Heart right ventricle (tissue), 16 donors: ENCODE measurements at regions of chr12 and their contacts with region 1.

Region 1: DNA sequence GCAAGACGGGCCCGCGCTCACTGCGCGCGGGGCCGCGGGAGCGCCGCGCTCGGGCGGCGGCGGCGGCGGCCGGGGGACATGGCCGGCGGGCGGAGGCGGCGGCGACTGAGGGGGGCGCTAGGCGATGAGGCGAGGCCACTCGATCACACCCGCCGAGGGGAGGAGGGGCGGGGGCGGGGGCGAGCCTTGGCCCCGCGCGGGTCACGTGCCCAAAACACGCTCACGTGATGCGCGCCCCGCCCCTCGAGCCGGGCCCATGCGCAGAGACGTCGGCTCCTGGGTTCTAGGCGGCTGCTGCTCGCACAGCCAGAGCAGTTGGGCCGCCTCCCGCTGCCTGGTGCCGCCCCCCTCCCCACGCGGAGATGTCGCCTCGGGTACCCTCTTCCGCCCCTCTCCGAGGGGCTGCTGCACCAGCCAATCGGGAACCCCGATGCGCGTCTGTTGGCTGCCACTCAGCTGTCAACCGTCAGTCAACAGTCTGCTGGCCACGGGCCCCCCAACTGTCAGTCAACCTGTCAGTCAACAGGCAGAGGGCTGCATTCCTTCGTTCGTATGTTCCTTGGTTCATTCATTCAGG is at the start of gene SPPL3:
- DNase-seq: peak; percentile 93 to 95
- ATAC-seq: peak; percentile 94 to 97 (median 95)
- H3K4me3 ChIP-seq: peak within 1 kb of the TSS; percentile 82 to 98 (median 92)
- H3K27ac ChIP-seq: peak within 1 kb of the TSS; percentile 80 to 94 (median 88)
- H3K4me1 ChIP-seq: peaks cover 0 to 42% (median 30%) of the 10 kb centered on the region in 9 donors
- H3K27me3 ChIP-seq: no peaks in the 10 kb centered on the region
- CTCF ChIP-seq: peak in 2 of 9 donors; percentile 23 to 32
- total RNA-seq, gene SPPL3: 26.6 to 45.0 (median 36.2) TPM

Region 2: DNA sequence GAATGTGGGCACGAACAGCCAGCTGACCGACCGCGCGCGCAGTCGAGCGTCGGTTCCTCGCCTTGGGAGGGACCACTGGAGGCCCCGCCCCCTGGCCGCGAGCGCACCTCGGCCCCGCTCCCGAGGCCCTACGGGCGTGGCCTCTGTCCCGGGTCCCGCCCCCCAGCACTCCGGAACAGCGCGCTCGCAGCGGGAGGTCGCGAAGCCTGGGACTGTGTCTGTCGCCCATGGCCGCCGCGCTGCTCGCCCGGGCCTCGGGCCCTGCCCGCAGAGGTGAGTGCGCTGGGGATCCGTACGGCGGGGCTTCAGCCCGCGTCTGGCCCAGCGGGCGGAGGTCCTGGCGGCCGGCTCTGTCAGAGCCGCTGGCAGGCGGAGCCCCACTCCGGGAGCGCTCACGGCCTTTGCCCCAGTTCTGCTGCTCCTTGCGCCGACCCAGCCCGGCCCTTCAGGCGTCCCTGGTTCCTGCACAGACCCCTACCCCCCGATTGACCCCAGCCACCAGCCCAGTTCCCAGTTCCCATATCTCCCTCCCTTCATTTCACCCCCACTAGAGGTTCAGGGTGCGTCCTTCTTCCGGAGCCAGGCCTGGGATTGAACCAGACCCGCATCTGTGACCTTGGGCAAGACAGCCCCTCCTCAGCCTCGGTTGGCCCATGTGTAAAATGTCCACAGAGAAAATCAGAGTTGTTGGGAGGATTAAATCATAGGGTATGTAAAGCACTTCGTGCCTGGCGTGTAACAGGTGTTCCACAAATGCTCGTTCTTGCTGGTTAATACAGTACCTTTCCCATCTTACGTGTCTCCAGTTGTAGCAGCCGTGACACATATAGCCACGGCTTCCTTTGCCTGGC is 178.4 kb before region 1 on chr12 and contains the start of gene ACADS:
- intact Hi-C with region 1: loop called in 1 of 10 experiments (anchors 10 kb)
- DNase-seq: peak; percentile 88 to 94
- ATAC-seq: peak; percentile 98 to 99 (median 99)
- H3K4me3 ChIP-seq: peak within 1 kb of the TSS; percentile 55 to 90 (median 78)
- H3K27ac ChIP-seq: peak within 1 kb of the TSS; percentile 34 to 91 (median 88)
- H3K4me1 ChIP-seq: peaks cover 0 to 30% (median 19%) of the 10 kb centered on the region in 9 donors
- H3K27me3 ChIP-seq: no peaks in the 10 kb centered on the region
- CTCF ChIP-seq: peak in 3 of 9 donors; percentile 14 to 28 (median 25)
- total RNA-seq, gene ACADS: 67.0 to 119 (median 77.9) TPM

Region 3: DNA sequence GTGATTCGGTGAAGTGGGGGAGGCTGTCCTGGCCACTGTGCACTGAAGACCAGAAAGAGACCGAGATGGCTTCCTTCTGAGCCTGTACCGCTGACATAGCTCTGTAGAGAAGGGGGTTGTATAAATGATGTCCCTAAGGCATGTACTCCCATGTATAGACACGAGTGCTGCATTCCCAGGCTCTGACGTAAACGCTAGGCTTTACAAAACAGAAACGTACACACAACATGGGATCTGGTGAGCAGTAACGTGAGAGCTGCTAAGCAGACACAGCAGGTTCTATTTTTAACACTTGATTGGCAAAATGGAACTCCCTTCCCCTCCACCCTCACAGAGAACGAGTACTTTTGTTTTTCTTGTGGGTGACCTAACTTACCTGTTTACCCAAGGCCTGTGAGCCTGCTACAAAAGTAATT is 142.8 kb before region 1 on chr12:
- intact Hi-C with region 1: loop called in 1 of 10 experiments (anchors 2 kb)
- DNase-seq: peak in 1 of 2 donors; percentile 40
- ATAC-seq: peak; percentile 39 to 84 (median 74)
- H3K4me3 ChIP-seq: peak overlapping the region in 1 of 10 donors; percentile 6
- H3K27ac ChIP-seq: peak overlapping the region; percentile 25 to 85 (median 66)
- H3K4me1 ChIP-seq: peaks cover 0 to 19% (median 14%) of the 10 kb centered on the region in 9 donors
- H3K27me3 ChIP-seq: no peaks in the 10 kb centered on the region
- CTCF ChIP-seq: no peak

Region 4: DNA sequence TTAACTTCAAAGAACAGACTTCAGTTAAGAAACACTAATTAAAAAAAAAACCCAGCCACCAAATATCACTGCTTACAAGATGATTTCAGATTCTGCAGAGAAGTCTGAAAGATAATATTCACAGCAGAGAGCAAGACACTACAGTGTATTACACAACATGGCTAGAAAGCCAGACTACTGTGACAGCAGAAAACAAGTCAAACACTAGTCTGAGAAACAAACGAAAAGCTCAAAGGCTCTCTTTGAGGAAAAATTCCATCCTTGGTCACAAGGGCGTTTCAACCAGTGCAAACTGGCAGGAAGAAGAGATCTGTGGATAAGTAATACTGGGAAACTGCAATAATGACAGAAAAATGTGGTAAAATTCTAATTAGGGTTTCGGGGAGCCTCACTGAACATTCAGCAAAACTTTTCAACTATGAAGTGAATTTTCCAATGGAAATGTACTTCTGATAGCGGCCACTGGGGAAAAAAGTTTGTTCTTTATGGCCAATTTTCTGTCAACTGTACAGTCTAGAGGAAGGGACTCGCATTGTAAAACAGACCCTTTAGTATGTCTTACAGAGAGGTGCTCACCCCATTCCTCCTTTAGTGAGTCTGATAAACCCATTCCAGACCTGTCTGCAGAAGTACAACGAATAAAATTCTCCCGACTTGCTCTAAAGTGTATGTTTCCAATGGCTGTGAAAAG is 128.3 kb before region 1 on chr12:
- intact Hi-C with region 1: loop called in 3 of 10 experiments (anchors 5 kb)
- DNase-seq: no peak
- ATAC-seq: peak in 1 of 8 donors; percentile 47
- H3K4me3 ChIP-seq: no peak overlapping the region
- H3K27ac ChIP-seq: peak overlapping the region in 4 of 10 donors; percentile 3 to 38 (median 14)
- H3K4me1 ChIP-seq: peaks cover 4 to 37% (median 20%) of the 10 kb centered on the region in 9 donors
- H3K27me3 ChIP-seq: no peaks in the 10 kb centered on the region
- CTCF ChIP-seq: no peak

Region 5: GRCh38 chr12:120783197-120783596 is 121.1 kb before region 1 on chr12:
- intact Hi-C with region 1: loop called in 3 of 10 experiments (anchors 5 kb)
- DNase-seq: no peak
- ATAC-seq: peak in 6 of 8 donors; percentile 38 to 89 (median 70)
- H3K4me3 ChIP-seq: peak overlapping the region in 1 of 10 donors; percentile 10
- H3K27ac ChIP-seq: peak overlapping the region in 9 of 10 donors; percentile 40 to 84 (median 63)
- H3K4me1 ChIP-seq: peaks cover 0 to 22% (median 8%) of the 10 kb centered on the region in 9 donors
- H3K27me3 ChIP-seq: no peaks in the 10 kb centered on the region
- CTCF ChIP-seq: no peak

Region 6: GRCh38 chr12:120797677-120798642 is 106.3 kb before region 1 on chr12:
- intact Hi-C with region 1: no loop called
- DNase-seq: no peak
- ATAC-seq: no peak
- H3K4me3 ChIP-seq: no peak overlapping the region
- H3K27ac ChIP-seq: no peak overlapping the region
- H3K4me1 ChIP-seq: peaks cover 0 to 38% (median 0%) of the 10 kb centered on the region in 9 donors
- H3K27me3 ChIP-seq: no peaks in the 10 kb centered on the region
- CTCF ChIP-seq: no peak

Region 7: DNA sequence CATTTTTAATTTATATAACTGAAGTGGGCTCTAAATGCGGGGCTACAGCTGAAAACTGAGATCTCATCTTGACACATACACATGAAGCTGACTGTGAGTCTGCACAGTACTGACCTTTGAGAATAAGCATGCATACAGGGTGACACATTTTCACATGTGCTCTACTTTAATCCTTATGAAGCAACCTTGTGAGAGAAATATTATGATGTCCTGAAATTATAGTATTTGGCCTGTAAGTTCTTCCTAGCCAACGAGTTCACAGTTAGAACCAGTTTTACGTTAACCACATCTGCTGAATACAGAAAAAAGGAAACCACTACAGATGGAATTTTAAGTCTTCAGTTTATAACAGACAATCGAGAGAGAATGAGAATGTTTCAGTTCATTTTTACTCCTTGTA is 70.4 kb before region 1 on chr12:
- intact Hi-C with region 1: loop called in 1 of 10 experiments (anchors 10 kb)
- DNase-seq: no peak
- ATAC-seq: peak in 6 of 8 donors; percentile 39 to 62 (median 54)
- H3K4me3 ChIP-seq: no peak overlapping the region
- H3K27ac ChIP-seq: peak overlapping the region in 4 of 10 donors; percentile 24 to 38 (median 30)
- H3K4me1 ChIP-seq: peaks cover 16 to 83% (median 65%) of the 10 kb centered on the region in 9 donors
- H3K27me3 ChIP-seq: no peaks in the 10 kb centered on the region
- CTCF ChIP-seq: no peak

Region 8: GRCh38 chr12:120846721-120847120 is 57.6 kb before region 1 on chr12:
- intact Hi-C with region 1: no loop called
- DNase-seq: no peak
- ATAC-seq: no peak
- H3K4me3 ChIP-seq: no peak overlapping the region
- H3K27ac ChIP-seq: peak overlapping the region in 3 of 10 donors; percentile 1 to 83 (median 35)
- H3K4me1 ChIP-seq: peaks cover 4 to 97% (median 88%) of the 10 kb centered on the region in 9 donors
- H3K27me3 ChIP-seq: no peaks in the 10 kb centered on the region
- CTCF ChIP-seq: no peak

Region 9: DNA sequence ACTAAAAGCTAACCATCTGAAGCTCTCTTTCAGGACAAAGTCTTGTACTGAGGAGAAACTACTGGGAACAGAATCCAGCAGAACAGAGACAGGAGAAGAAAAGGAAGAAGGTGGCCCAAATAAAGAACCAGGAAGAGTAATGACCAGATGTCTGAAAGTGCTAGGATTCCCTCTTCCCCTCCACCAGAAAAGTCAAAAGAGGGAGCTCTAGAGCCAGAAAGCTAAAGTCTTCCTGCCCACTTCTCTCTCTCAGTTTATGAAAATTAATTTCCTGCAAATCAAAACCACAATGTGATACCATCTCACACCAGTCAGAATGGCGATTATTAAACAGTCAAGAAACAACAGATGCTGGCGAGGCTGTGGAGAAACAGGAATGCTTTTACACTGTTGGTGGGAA is 47.3 kb before region 1 on chr12:
- intact Hi-C with region 1: loop called in 1 of 10 experiments (anchors 5 kb)
- DNase-seq: no peak
- ATAC-seq: peak in 2 of 8 donors; percentile 28 to 37
- H3K4me3 ChIP-seq: no peak overlapping the region
- H3K27ac ChIP-seq: peak overlapping the region in 1 of 10 donors; percentile 12
- H3K4me1 ChIP-seq: peaks cover 0 to 49% (median 38%) of the 10 kb centered on the region in 9 donors
- H3K27me3 ChIP-seq: no peaks in the 10 kb centered on the region
- CTCF ChIP-seq: peak in 5 of 9 donors; percentile 14 to 53 (median 45)

Region 10: DNA sequence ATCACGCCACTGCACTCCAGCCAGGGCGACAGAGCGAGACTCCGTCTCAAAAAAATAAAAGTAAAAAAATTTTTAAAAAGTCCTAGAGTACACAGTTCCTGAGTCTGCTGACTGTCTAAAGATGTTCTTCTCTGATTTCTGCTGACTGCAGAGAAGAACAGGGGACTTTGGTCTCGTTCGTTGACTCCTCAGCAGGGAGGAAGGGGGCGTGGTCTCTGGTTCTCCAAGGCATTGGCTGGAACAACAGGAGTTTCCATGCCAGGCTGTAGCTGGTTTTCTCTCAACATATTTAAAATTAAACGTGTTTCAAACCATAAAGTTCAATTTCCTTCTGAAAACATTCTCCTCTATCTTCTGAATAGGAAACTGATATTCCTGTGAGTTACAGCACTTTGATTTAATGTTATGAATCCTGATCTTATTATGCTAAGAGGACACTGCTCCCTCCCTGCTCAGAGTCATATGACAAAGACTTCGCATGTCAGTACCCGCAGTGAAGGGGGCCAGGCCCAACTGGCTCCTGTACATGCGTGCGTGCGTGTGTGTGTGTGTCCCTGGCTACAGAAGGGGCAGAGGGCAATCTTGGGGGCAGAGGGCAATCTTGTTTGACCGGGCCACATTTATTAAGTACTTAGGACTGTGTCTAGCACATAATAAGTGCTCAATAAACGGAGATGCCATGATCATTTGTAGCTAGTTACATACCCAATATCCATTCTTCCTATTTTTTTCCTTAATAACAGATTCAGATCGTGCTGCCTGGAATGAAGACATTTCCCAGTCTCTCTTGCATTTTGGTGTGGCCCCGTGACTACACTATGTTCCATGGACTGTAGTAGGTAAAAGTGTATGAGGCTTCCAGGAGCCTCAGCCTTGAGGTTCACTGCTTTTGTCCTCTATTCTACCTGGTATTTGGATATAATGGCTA is 57.6 kb after region 1 on chr12:
- intact Hi-C with region 1: no loop called
- DNase-seq: peak; percentile 18 to 29
- ATAC-seq: peak in 3 of 8 donors; percentile 33 to 63 (median 44)
- H3K4me3 ChIP-seq: no peak overlapping the region
- H3K27ac ChIP-seq: peak overlapping the region in 1 of 10 donors; percentile 26
- H3K4me1 ChIP-seq: no peaks in the 10 kb centered on the region
- H3K27me3 ChIP-seq: peaks cover 0 to 5% (median 0%) of the 10 kb centered on the region in 7 donors
- CTCF ChIP-seq: no peak